ENCODE measurements at regions of chr7 and their contacts with region 1.

Region 1: GRCh38 chr7:103148994-103149807 is at the start of gene NAPEPLD:
- DNase-seq: peak; percentile 88 to 91
- H3K4me3 ChIP-seq: peak within 1 kb of the TSS; percentile 76
- H3K4me3 Mint-ChIP-seq: peak within 1 kb of the TSS; percentile 99
- H3K27ac Mint-ChIP-seq: peak within 1 kb of the TSS; percentile 97
- H3K4me1 ChIP-seq: peaks cover 31% of the 10 kb centered on the region
- H3K4me1 Mint-ChIP-seq: peaks cover 33% of the 10 kb centered on the region
- H3K27me3 ChIP-seq: no peaks in the 10 kb centered on the region
- H3K27me3 Mint-ChIP-seq: no peaks in the 10 kb centered on the region
- CTCF ChIP-seq: no peak
- total RNA-seq, gene NAPEPLD: 16.9 and 18.9 TPM in 2 replicates

Region 2: DNA sequence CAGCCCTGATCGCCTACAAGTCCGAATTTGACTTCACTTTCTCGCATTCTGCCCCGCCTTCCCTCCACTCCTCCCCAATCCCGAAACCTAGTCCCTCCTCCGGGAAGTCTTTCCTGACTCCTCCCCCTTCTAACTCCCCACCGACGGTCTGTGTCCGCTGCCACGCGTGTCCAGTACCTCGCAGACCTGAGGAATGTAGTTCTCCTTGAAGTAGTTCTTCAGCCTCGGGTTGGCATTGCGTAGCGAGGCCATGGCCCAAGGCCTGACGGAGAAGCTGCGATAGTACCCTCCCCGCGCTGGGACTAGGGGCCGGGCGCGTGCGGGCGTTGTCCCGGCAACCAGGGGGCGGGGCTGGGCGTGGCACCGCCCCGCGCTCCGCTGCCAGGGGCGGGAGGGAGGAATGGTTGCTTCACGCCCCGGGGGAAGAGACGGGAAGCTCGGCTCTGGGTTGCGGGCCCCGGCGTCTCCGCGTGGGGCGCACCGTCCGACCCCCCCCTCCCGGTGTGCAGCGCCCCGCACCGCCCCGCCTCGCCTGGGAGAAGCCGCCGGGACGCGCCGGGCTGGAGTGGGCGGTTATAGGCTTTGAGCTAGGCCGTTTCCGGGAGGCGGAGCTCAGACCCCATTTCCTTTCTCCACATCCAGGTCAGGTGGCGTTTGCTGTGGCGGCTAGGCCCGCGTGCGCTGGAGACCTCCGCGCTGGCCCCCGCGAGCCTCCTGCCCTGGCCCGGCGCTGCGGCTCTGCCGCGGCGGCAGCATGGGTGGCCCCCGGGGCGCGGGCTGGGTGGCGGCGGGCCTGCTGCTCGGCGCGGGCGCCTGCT is 74.5 kb before region 1 on chr7 and contains the starts of genes ARMC10 and FBXL13:
- CTCF ChIA-PET with region 1: interaction called, 4 read pairs
- POLR2A ChIA-PET with region 1: interaction called, 21 read pairs
- intact Hi-C with region 1: loop called (anchors 5 kb)
- DNase-seq: peak; percentile 93 to 95
- H3K4me3 ChIP-seq: peak within 1 kb of the TSS; percentile 88
- H3K4me3 Mint-ChIP-seq: peak within 1 kb of the TSS; percentile 78
- H3K27ac Mint-ChIP-seq: peak within 1 kb of the TSS; percentile 82
- H3K4me1 ChIP-seq: 0 out of 2 replicates have a peak, but pooled peaks cover 4% of the 10 kb centered on the region
- H3K4me1 Mint-ChIP-seq: peaks cover 11% of the 10 kb centered on the region
- H3K27me3 ChIP-seq: no peaks in the 10 kb centered on the region
- H3K27me3 Mint-ChIP-seq: no peaks in the 10 kb centered on the region
- CTCF ChIP-seq: no peak
- total RNA-seq, gene ARMC10: 28.9 and 29.2 TPM in 2 replicates
- total RNA-seq, gene FBXL13: 0.37 and 0.43 TPM in 2 replicates

Region 3: GRCh38 chr7:103113164-103113563 is 36.0 kb before region 1 on chr7:
- CTCF ChIA-PET with region 1: no interaction called
- POLR2A ChIA-PET with region 1: no interaction called
- intact Hi-C with region 1: no loop called
- DNase-seq: no peak
- H3K4me3 ChIP-seq: no peak overlapping the region
- H3K4me3 Mint-ChIP-seq: no peak overlapping the region
- H3K27ac Mint-ChIP-seq: no peak overlapping the region
- H3K4me1 ChIP-seq: no peaks in the 10 kb centered on the region
- H3K4me1 Mint-ChIP-seq: no peaks in the 10 kb centered on the region
- H3K27me3 ChIP-seq: no peaks in the 10 kb centered on the region
- H3K27me3 Mint-ChIP-seq: no peaks in the 10 kb centered on the region
- CTCF ChIP-seq: no peak

Region 4: GRCh38 chr7:103240806-103241205 is 91.6 kb after region 1 on chr7:
- CTCF ChIA-PET with region 1: no interaction called
- POLR2A ChIA-PET with region 1: no interaction called
- intact Hi-C with region 1: no loop called
- DNase-seq: no peak
- H3K4me3 ChIP-seq: no peak overlapping the region
- H3K4me3 Mint-ChIP-seq: no peak overlapping the region
- H3K27ac Mint-ChIP-seq: no peak overlapping the region
- H3K4me1 ChIP-seq: no peaks in the 10 kb centered on the region
- H3K4me1 Mint-ChIP-seq: no peaks in the 10 kb centered on the region
- H3K27me3 ChIP-seq: no peaks in the 10 kb centered on the region
- H3K27me3 Mint-ChIP-seq: peaks cover 2% of the 10 kb centered on the region
- CTCF ChIP-seq: no peak

Region 5: DNA sequence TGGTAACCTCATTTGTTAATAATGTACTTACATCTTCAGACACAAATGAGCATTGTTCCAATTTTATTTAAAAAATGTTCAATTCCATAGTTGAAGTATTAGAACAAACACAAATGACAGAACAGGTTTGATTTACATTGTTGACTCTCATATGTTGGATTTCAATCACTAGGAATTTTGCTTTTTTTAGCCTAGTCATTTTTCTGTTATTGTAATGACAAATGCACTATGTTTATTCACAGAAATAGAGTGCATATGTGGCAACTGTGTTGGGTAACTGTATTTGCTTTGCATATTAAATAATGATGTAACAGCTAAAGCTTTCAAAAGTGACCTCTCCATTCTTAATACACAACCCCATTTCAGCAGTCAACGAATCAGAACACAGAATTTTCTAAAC is 350.7 kb after region 1 on chr7:
- CTCF ChIA-PET with region 1: no interaction called
- POLR2A ChIA-PET with region 1: no interaction called
- intact Hi-C with region 1: no loop called
- DNase-seq: no peak
- H3K4me3 ChIP-seq: no peak overlapping the region
- H3K4me3 Mint-ChIP-seq: no peak overlapping the region
- H3K27ac Mint-ChIP-seq: no peak overlapping the region
- H3K4me1 ChIP-seq: no peaks in the 10 kb centered on the region
- H3K4me1 Mint-ChIP-seq: no peaks in the 10 kb centered on the region
- H3K27me3 ChIP-seq: no peaks in the 10 kb centered on the region
- H3K27me3 Mint-ChIP-seq: no peaks in the 10 kb centered on the region
- CTCF ChIP-seq: no peak

Measured in Caco-2 (cell line).